ENCODE measurements at regions of chr9 and their contacts with region 1.

Region 1: DNA sequence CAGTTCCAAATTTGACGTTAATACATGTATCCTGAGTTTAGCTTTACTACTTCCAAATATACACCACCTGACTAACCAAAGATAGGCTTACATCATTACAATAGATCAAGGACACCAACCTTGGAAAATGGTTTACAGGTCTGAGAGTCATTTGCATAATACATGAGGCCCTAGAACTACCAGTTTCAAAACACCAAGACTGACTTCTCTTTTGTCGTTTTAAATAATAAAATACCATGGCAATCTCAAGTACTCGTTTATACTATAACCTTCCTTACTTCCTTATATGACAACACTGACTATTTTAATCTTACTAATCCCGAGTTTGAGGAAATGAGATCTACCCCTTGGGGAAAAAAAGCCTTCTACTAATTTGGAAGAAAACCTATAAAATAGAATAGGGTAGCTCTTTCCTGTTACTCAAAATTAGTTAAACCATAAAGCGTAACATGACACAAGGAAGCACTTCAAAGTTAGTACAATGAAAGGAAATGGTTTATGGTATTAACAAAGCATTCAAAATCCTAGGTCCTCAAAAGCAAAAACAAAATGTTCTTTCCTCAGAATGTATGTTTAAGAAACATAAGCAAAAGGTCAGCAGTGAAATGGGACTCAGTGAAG is 42.1 kb downstream of the UBQLN1 start:
- DNase-seq: no peak
- ATAC-seq: no peak
- H3K4me3 ChIP-seq: no peak overlapping the region
- H3K4me3 Mint-ChIP-seq: no peak overlapping the region
- H3K27ac ChIP-seq: no peak overlapping the region
- H3K27ac Mint-ChIP-seq: peak overlapping the region in 1 of 2 donors; percentile 78
- H3K4me1 ChIP-seq: no peaks in the 10 kb centered on the region
- H3K4me1 Mint-ChIP-seq: peaks cover 22 to 28% (median 22%) of the 10 kb centered on the region in 3 donors
- H3K27me3 ChIP-seq: no peaks in the 10 kb centered on the region
- H3K27me3 Mint-ChIP-seq: no peaks in the 10 kb centered on the region

Region 2: DNA sequence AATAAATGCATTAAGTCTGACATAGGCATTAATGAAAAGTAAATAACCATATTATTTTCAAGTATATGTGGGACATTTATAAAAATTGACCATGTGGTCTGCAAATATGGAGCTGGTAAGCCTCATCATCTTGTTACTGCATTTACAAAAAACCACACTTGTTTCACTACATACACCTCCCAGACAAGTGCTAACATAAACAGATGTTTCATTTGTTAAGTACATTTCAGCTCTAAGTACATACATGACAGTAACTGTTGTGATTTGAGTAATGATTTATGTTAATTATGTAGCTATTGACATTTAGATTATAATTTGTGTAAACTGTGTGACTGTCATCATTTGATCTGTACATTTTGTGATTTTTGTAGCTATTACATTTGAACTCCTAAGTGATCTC is 28.9 kb before region 1 on chr9:
- CTCF ChIA-PET with region 1: no interaction called
- POLR2A ChIA-PET with region 1: interaction called in 1 of 2 experiments, 12 read pairs
- DNase-seq: no peak
- ATAC-seq: no peak
- H3K4me3 ChIP-seq: no peak overlapping the region
- H3K4me3 Mint-ChIP-seq: no peak overlapping the region
- H3K27ac ChIP-seq: no peak overlapping the region
- H3K27ac Mint-ChIP-seq: no peak overlapping the region
- H3K4me1 ChIP-seq: no peaks in the 10 kb centered on the region
- H3K4me1 Mint-ChIP-seq: no peaks in the 10 kb centered on the region
- H3K27me3 ChIP-seq: no peaks in the 10 kb centered on the region
- H3K27me3 Mint-ChIP-seq: no peaks in the 10 kb centered on the region

Region 3: GRCh38 chr9:84296146-84296843 is 630.6 kb after region 1 on chr9:
- CTCF ChIA-PET with region 1: no interaction called
- POLR2A ChIA-PET with region 1: no interaction called
- DNase-seq: peak in 7 of 35 experiments; percentile 3 to 61 (median 11)
- ATAC-seq: peak; percentile 48 to 77 (median 52)
- H3K4me3 ChIP-seq: no peak overlapping the region
- H3K4me3 Mint-ChIP-seq: peak overlapping the region in 2 of 3 donors; percentile 10 to 17
- H3K27ac ChIP-seq: peak overlapping the region; percentile 5
- H3K27ac Mint-ChIP-seq: peak overlapping the region; percentile 87 to 94
- H3K4me1 ChIP-seq: peaks cover 22 to 37% of the 10 kb centered on the region in 2 experiments
- H3K4me1 Mint-ChIP-seq: peaks cover 46 to 58% (median 54%) of the 10 kb centered on the region in 3 donors
- H3K27me3 ChIP-seq: no peaks in the 10 kb centered on the region
- H3K27me3 Mint-ChIP-seq: no peaks in the 10 kb centered on the region

Measured in T-cell (primary cell).